ENCODE measurements at regions of chr19 and their contacts with region 1.

Region 1: GRCh38 chr19:4732680-4733114 is 9.1 kb upstream of the DPP9 start:
- DNase-seq: peak; percentile 83
- CTCF ChIP-seq: peak; percentile 59

Region 2: DNA sequence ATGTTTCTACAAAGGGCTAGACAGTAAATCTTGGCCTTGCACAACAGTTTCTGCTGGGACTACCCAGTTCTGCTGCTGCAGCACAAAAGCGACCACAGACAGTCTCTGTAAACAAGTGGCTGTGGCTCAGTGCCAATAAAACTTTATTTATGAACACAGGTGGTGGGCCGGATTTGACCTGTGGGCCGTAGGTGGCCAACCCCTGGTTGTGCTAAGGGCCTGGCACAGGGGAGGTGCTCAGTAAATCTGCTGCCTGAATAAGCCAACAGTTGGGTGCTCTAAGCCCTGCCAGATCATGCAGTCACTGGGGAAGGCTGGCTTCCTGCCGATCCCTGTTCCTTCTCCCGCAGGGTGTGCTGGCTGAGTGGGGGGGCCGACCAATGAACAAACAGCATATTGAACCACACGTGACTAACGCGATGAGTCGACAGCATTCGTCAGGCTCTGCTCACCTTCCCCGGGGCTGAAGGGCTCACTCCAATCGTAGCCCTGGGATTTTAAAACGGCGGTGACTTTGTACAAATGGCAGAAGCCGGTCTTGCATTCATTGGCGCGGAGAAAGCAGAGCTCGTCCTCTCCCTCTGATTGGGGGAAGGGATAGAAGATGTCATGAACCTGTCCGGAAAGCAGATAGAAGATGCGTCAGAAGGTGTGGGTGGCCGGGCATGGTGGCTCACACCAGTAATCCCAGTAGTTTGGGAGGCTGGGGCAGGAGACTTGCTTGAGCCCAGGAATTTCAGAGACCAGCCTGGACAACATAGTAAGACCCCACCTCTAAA is 38.3 kb before region 1 on chr19:
- CTCF ChIA-PET with region 1: no interaction called
- POLR2A ChIA-PET with region 1: no interaction called
- DNase-seq: no peak
- CTCF ChIP-seq: no peak

Region 3: GRCh38 chr19:4781801-4782200 is 49.1 kb after region 1 on chr19:
- CTCF ChIA-PET with region 1: interaction called, 15 read pairs
- POLR2A ChIA-PET with region 1: no interaction called
- DNase-seq: no peak
- CTCF ChIP-seq: no peak

Region 4: GRCh38 chr19:4803736-4804695 is 71.3 kb after region 1 on chr19:
- CTCF ChIA-PET with region 1: interaction called, 21 read pairs
- POLR2A ChIA-PET with region 1: no interaction called
- DNase-seq: peak; percentile 84
- CTCF ChIP-seq: peak; percentile 89